Activated CD8-positive, alpha-beta T cell treated with anti-CD3 and anti-CD28 coated beads for 36 hours (primary cell): ENCODE measurements at regions of chr9 and their contacts with region 1.

Region 1: DNA sequence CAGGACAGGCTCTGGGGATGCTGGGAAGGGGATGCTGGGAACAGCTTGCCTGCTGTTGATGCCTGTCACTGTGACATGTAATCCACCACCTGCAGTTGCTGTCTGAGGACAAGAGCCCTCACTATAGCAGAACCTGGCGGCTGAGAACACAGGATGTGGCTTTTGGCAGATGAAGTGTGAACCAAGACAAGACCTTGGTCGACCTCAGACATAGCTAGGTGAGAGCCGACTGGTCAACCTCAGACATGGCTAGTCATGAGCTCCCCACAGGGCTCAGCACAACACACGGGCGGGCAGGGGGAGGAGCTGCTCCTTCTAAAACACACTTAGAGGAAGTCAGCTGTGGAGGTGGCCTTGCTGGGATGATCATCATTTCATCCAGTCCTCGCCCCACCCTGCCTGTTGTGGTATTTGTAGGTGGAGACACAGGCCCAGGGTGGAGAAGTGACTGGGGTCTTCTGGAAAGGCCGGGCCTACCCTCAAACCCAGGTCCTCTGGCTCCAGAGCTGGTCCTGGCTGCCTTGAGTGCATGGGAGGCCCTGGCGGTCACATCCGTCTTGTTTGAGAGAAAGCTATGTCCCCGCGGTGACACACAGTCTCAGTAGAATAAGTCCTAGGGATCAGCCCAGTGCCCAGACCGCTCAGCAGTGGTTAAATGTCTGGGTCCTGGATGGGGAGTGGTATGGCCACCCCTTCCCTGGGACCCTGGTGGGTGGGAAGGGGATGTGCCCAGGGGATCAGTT is 6.1 kb downstream of the SUSD3 start:
- DNase-seq: peak; percentile 99
- ATAC-seq: peak; percentile 91
- H3K4me3 Mint-ChIP-seq: peak overlapping the region; percentile 75
- H3K27ac Mint-ChIP-seq: peak overlapping the region; percentile 97
- H3K4me1 Mint-ChIP-seq: peaks cover 90% of the 10 kb centered on the region
- H3K27me3 Mint-ChIP-seq: no peaks in the 10 kb centered on the region
- CTCF ChIP-seq: no peak

Region 2: GRCh38 chr9:92963831-92964626 is 100.5 kb before region 1 on chr9:
- CTCF ChIA-PET with region 1: interaction called, 3 read pairs
- POLR2A ChIA-PET with region 1: interaction called, 15 read pairs
- intact Hi-C with region 1: loop called (anchors 5 kb)
- DNase-seq: peak; percentile 90
- ATAC-seq: peak; percentile 64
- H3K4me3 Mint-ChIP-seq: peak overlapping the region; percentile 98
- H3K27ac Mint-ChIP-seq: peak overlapping the region; percentile 100
- H3K4me1 Mint-ChIP-seq: peaks cover 55% of the 10 kb centered on the region
- H3K27me3 Mint-ChIP-seq: no peaks in the 10 kb centered on the region
- CTCF ChIP-seq: no peak

Region 3: DNA sequence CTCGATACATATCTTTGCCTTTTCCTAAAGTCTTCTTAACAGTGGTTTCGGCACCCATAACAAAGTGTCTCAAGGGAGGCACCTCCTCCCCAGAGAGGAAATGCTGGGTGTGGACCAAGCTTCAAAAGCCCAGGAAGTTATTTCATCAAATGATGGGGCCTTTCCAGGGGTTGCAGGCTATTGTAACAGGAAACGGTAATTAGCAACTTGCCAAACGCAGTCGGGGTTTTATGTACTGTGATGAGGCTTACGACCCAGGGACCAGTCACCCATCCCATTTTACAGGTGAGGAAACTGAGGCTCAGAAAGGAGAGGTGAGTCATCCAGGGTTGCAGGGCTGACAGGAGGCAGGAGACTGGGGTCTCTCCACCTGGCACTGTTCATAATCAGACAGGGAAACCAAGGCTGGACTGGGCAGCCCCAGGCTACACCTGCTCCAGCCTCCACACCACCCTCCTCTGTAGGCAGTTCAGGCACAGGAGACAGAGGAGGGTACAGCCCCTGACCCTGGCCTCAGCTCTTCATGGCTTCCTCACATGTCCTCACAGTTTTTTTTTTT is 36.0 kb before region 1 on chr9:
- CTCF ChIA-PET with region 1: interaction called, 4 read pairs
- POLR2A ChIA-PET with region 1: interaction called, 13 read pairs
- intact Hi-C with region 1: loop called (anchors 5 kb)
- DNase-seq: peak; percentile 81
- ATAC-seq: peak; percentile 83
- H3K4me3 Mint-ChIP-seq: peak overlapping the region; percentile 52
- H3K27ac Mint-ChIP-seq: peak overlapping the region; percentile 96
- H3K4me1 Mint-ChIP-seq: peaks cover 71% of the 10 kb centered on the region
- H3K27me3 Mint-ChIP-seq: no peaks in the 10 kb centered on the region
- CTCF ChIP-seq: no peak

Region 4: GRCh38 chr9:93051680-93052089 is 12.9 kb before region 1 on chr9:
- CTCF ChIA-PET with region 1: interaction called, 11 read pairs
- POLR2A ChIA-PET with region 1: interaction called, 11 read pairs
- intact Hi-C with region 1: no loop called
- DNase-seq: no peak
- ATAC-seq: no peak
- H3K4me3 Mint-ChIP-seq: no peak overlapping the region
- H3K27ac Mint-ChIP-seq: no peak overlapping the region
- H3K4me1 Mint-ChIP-seq: peaks cover 20% of the 10 kb centered on the region
- H3K27me3 Mint-ChIP-seq: no peaks in the 10 kb centered on the region
- CTCF ChIP-seq: no peak

Region 5: DNA sequence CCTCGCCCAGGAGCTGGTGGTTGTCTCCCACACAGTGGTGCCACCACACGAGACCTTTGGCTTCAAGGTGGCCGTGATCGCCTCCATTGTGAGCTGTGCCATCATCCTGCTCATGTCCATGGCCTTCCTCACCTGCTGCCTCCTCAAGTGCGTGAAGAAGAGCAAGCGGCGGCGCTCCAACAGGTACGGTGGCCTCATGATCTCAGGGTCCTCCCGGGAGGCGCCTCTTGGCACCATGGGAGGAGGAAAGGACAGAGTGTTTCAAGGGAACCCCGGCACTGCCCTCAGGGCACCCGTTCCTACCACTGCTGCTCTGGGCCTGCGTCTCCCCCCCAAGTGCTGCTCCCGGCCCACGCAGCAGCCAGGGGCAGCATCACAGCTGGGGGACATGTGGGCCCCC is 13.2 kb after region 1 on chr9:
- CTCF ChIA-PET with region 1: interaction called, 9 read pairs
- POLR2A ChIA-PET with region 1: interaction called, 30 read pairs
- intact Hi-C with region 1: no loop called
- DNase-seq: no peak
- ATAC-seq: no peak
- H3K4me3 Mint-ChIP-seq: no peak overlapping the region
- H3K27ac Mint-ChIP-seq: peak overlapping the region; percentile 4
- H3K4me1 Mint-ChIP-seq: peaks cover 40% of the 10 kb centered on the region
- H3K27me3 Mint-ChIP-seq: no peaks in the 10 kb centered on the region
- CTCF ChIP-seq: no peak

Region 6: DNA sequence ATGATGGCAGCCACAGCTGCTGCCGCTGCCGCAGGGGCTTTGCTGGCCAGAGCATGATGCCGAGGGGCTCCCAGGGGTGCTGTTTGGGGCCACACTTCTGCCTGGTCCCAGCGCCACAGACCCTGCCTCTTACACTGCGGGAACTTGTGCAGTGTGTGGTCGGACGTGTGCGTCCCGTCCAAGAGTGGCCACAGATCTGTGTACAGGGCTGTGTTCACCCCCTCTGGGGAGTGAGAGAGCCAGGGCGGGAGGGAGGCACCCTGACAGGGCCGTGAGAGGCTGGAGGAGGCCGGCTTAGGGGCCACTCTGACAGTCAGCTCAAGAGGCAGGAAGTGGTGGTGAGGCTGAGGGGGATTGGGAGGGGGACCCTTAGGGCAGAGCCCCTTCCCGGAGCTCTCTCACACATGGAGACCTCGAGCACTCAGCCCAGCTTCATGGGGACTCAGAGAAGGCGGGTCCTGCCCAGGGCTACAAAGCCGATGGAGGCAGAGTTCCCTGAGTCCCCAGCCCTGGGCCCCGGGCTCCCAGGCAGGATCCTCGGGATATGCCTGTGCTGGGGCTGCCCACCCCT is 18.4 kb after region 1 on chr9:
- CTCF ChIA-PET with region 1: interaction called, 9 read pairs
- POLR2A ChIA-PET with region 1: interaction called, 30 read pairs
- intact Hi-C with region 1: no loop called
- DNase-seq: peak; percentile 50
- ATAC-seq: peak; percentile 64
- H3K4me3 Mint-ChIP-seq: no peak overlapping the region
- H3K27ac Mint-ChIP-seq: peak overlapping the region; percentile 91
- H3K4me1 Mint-ChIP-seq: peaks cover 30% of the 10 kb centered on the region
- H3K27me3 Mint-ChIP-seq: no peaks in the 10 kb centered on the region
- CTCF ChIP-seq: no peak

Region 7: GRCh38 chr9:93095205-93096130 is 30.9 kb after region 1 on chr9:
- CTCF ChIA-PET with region 1: interaction called, 3 read pairs
- POLR2A ChIA-PET with region 1: interaction called, 12 read pairs
- intact Hi-C with region 1: loop called (anchors 5 kb)
- DNase-seq: peak; percentile 100
- ATAC-seq: peak; percentile 82
- H3K4me3 Mint-ChIP-seq: peak overlapping the region; percentile 86
- H3K27ac Mint-ChIP-seq: peak overlapping the region; percentile 97
- H3K4me1 Mint-ChIP-seq: peaks cover 67% of the 10 kb centered on the region
- H3K27me3 Mint-ChIP-seq: no peaks in the 10 kb centered on the region
- CTCF ChIP-seq: no peak

Region 8: DNA sequence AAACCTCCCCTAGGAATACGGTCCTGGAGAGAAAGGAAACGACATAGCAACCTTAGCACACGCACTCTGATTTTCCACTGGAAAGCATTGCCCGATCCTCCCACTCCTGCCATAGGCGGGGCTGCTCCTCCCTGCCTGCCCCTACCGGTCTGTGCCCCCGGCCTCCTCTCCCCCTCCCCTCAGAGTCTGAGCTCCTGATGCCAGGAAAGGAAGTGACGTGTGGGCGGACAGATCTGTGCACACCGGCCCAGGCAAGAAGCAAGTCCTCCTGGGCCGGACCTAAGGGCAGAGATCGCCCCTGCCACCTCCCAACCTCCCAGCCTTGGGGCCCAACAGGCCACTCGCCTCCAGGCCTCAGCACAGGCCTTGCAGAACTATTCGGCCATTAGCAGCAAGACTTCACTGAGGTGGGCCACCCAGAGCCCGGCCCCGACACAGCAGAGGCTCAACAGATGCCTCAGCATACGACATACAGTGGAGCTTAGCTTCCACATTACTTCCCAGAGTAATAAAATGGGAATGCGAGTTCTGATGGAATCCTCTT is 62.3 kb after region 1 on chr9:
- CTCF ChIA-PET with region 1: no interaction called
- POLR2A ChIA-PET with region 1: no interaction called
- intact Hi-C with region 1: no loop called
- DNase-seq: peak; percentile 61
- ATAC-seq: peak; percentile 69
- H3K4me3 Mint-ChIP-seq: peak overlapping the region; percentile 55
- H3K27ac Mint-ChIP-seq: peak overlapping the region; percentile 87
- H3K4me1 Mint-ChIP-seq: peaks cover 56% of the 10 kb centered on the region
- H3K27me3 Mint-ChIP-seq: no peaks in the 10 kb centered on the region
- CTCF ChIP-seq: no peak